IMR-90 (cell line): ENCODE measurements at regions of chr15 and their contacts with region 1.

Region 1: DNA sequence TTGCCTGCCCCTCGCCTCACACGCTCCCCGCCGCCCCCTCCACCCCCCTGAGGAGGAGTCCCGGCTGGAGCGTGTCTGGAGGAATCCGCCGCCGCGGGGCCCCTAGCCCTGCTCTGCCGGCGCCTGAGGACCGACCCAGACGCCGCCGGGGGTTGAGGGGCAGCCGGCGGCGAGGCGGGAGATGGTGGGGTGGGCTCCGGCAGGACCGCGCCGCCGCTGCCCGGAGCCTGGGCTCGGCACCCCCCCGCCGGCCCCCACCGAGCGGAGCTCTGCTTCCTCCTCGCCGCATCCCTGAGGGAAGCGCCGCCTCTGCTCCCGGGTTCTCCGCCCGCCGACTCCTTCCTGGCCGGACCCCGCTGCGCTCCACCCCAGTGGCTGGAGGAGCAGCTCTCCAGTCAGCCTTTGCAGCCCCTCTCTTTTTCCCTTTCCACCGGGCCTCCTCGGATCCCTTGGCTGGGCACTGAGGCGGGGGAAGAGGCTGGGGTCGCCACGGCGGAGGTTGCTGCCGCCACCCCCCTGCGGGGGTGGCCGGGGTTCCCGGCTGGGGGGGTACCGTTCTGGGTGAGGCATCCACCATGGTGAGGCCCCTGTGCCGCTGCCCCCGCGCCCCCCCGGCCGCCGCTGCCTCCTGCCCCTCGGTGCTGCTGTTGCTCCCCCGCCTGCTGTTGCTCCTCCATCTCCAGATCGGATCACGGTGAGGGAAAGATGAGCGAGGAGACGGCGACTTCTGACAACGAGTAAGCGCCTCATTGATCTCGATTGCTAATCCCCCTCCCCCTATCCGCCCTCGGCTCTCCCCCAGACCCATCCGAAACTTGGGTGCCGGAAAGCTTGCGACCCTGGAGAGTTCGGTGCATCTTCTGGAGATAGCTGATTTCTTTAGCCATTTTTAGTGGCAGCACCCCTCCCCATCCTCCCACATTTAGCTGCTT is at the start of gene SPRED1:
- DNase-seq: peak; percentile 48
- ATAC-seq: peak; percentile 50
- H3K4me3 ChIP-seq: peak within 1 kb of the TSS; percentile 95
- H3K27ac ChIP-seq: peak within 1 kb of the TSS; percentile 98
- H3K4me1 ChIP-seq: peaks cover 10% of the 10 kb centered on the region
- H3K27me3 ChIP-seq: no peaks in the 10 kb centered on the region
- CTCF ChIP-seq: no peak
- POLR2A ChIP-seq: no peak
- RAD21 ChIP-seq: no peak
- total RNA-seq, gene SPRED1: 17.9 and 38.3 TPM in 2 replicates

Region 2: DNA sequence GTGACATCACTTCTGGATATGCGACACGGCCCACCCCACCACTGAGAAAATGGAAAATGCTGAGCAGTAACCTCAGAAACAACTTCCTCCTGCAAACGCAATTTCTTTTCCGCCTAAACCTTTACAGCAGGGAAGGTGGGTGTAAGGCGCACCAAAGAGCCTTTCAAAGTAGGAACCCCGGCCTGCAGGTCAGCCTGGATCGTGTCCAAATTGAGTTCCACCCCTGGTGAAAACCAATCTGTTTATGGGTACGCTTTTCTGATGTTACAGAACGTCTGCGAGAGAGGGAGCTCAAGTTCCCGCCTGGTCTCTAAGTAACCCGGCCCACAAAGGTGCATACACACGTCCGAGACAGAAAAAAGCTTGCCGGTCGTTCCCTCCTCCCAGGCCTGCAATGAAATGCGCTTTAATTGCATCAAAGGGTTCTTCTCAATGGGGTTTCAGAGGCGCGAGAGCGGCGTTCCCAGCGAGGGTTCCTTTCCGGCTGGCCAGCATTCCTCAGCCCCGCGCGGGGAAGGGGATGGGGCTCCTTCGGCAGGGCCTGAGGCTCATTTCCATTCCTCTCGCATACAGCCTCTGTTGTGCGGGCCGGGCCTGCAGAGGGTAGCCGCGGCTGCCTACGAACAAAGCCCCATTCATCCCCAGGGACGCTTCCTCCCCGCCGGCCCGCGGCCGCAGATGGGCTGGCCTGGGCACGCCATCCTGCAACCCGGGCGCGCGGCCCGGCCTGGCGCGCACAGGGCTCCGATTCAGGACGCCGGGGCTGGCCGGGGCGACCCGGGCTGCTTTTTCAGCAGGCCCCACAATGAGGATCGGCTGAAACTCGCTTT is 180.2 kb before region 1 on chr15:
- CTCF ChIA-PET with region 1: interaction called, 6 read pairs
- POLR2A ChIA-PET with region 1: interaction called, 12 read pairs
- dilution Hi-C with region 1: no loop called
- in situ Hi-C with region 1: no loop called
- intact Hi-C with region 1: loop called (anchors 2 kb)
- DNase-seq: peak; percentile 71
- ATAC-seq: peak; percentile 75
- H3K4me3 ChIP-seq: peak overlapping the region; percentile 28
- H3K27ac ChIP-seq: peak overlapping the region; percentile 85
- H3K4me1 ChIP-seq: peaks cover 9% of the 10 kb centered on the region
- H3K27me3 ChIP-seq: no peaks in the 10 kb centered on the region
- CTCF ChIP-seq: peak; percentile 25; the same call in 1 of the 2 replicates
- POLR2A ChIP-seq: no peak
- RAD21 ChIP-seq: peak; percentile 17; the same call in 1 of the 2 replicates

Region 3: DNA sequence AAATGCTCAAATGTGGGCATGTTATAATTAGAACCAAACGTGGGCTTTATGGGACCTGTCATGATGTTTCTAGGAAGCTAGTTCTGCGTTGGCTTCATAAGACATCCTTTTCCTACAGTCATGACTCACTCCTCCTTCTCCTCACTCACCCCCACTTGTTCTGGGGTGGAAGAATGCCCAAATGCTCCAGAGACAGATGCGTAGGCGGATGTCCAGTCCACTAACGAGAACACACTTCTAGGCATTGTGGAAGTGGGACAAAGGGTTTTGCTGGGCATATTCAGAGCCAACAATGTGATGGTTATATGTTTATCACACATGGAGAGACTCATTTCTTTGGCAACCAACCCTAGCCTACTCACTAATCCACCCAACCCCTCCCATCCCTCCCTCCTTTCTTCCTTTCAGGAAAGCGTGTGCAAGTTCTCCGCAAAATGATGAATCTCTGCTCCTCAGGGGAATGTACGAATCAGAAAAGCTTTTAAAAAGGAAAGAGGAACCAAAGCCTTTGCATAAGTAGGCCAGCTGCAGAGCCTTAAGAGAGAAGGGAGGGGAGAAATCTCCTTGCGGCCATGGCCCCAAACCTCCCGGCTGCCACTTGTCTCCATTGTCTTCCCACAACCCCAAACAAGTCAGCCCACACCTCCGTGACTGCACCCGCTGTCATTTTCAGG is 123.1 kb before region 1 on chr15:
- CTCF ChIA-PET with region 1: no interaction called
- POLR2A ChIA-PET with region 1: interaction called, 4 read pairs
- dilution Hi-C with region 1: no loop called
- in situ Hi-C with region 1: no loop called
- intact Hi-C with region 1: loop called (anchors 1 kb)
- DNase-seq: peak; percentile 99
- ATAC-seq: peak; percentile 81
- H3K4me3 ChIP-seq: peak overlapping the region; percentile 10; the same call in 1 of the 2 replicates
- H3K27ac ChIP-seq: peak overlapping the region; percentile 54
- H3K4me1 ChIP-seq: peaks cover 4% of the 10 kb centered on the region
- H3K27me3 ChIP-seq: no peaks in the 10 kb centered on the region
- CTCF ChIP-seq: no peak
- POLR2A ChIP-seq: no peak
- RAD21 ChIP-seq: peak; percentile 20

Region 4: DNA sequence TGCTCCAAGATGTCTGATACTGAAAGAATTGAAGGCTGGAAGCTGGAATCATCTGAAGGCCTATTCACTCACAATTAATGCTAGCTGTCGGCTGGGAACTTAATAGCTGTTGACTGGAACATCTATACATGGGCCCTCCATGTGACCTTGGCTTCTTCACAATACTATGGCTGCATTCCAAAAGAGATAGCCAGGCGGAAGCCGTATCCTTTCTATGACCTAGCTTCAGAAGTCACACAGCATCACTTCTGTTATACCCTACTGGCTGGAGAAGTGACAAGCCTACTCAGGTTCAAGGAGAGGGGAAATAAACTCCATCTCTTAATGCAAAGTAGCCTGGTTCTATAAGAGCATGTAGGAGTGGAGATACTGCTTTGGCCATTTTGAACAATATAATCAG is 51.0 kb before region 1 on chr15:
- CTCF ChIA-PET with region 1: no interaction called
- POLR2A ChIA-PET with region 1: no interaction called
- dilution Hi-C with region 1: no loop called
- in situ Hi-C with region 1: no loop called
- intact Hi-C with region 1: no loop called
- DNase-seq: no peak
- ATAC-seq: no peak
- H3K4me3 ChIP-seq: no peak overlapping the region
- H3K27ac ChIP-seq: no peak overlapping the region
- H3K4me1 ChIP-seq: no peaks in the 10 kb centered on the region
- H3K27me3 ChIP-seq: peaks cover 8% of the 10 kb centered on the region
- CTCF ChIP-seq: no peak
- POLR2A ChIP-seq: no peak
- RAD21 ChIP-seq: no peak

Region 5: DNA sequence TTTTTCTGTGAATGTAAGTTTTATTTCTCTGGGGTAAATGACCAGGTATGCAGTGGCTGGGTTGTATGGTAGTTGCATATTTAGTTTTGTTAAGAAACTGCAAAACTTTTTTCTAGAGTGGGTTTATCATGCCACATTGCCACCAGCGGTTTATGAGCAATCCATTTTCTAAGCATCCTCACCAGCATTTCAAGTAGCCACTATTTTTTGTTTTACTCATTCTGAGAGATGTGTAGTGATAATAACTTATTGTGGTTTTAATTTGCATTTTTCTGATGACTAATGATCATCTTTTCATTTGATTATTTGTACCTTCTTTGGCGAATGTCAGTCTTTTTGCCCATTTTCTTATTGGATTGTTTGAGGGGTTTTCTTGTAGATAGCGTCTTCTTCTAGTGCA is 56.0 kb after region 1 on chr15:
- CTCF ChIA-PET with region 1: no interaction called
- POLR2A ChIA-PET with region 1: no interaction called
- dilution Hi-C with region 1: no loop called
- in situ Hi-C with region 1: no loop called
- intact Hi-C with region 1: no loop called
- DNase-seq: no peak
- ATAC-seq: no peak
- H3K4me3 ChIP-seq: no peak overlapping the region
- H3K27ac ChIP-seq: no peak overlapping the region
- H3K4me1 ChIP-seq: no peaks in the 10 kb centered on the region; the same call in 1 of the 2 replicates
- H3K27me3 ChIP-seq: no peaks in the 10 kb centered on the region
- CTCF ChIP-seq: no peak
- POLR2A ChIP-seq: no peak
- RAD21 ChIP-seq: no peak

Region 6: DNA sequence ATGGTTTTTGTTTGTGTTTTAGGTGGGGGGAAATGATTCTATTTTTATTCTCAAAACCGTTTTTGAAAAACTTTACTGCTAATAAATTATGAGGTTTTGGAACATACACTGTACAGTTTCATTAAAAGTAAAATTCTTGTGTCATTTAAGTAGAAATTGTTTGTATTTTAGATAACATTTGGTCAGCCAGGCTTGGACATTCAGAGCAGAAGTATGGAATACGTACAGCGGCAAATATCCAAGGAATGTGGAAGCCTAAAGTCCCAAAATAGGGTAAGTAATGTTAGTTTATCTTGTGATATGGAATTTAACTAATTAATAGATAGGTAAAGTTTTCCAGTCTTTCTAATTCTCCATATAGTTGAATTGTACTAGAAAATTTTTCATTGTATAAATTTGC is 96.5 kb after region 1 on chr15:
- CTCF ChIA-PET with region 1: interaction called, 3 read pairs
- POLR2A ChIA-PET with region 1: interaction called, 5 read pairs
- dilution Hi-C with region 1: no loop called
- in situ Hi-C with region 1: loop called (anchors 10 kb)
- intact Hi-C with region 1: loop called (anchors 1 kb)
- DNase-seq: peak; percentile 62
- ATAC-seq: peak; percentile 72
- H3K4me3 ChIP-seq: no peak overlapping the region
- H3K27ac ChIP-seq: no peak overlapping the region
- H3K4me1 ChIP-seq: peaks cover 7% of the 10 kb centered on the region; the same call in 1 of the 2 replicates
- H3K27me3 ChIP-seq: no peaks in the 10 kb centered on the region
- CTCF ChIP-seq: no peak
- POLR2A ChIP-seq: no peak
- RAD21 ChIP-seq: no peak

Region 7: GRCh38 chr15:38389924-38390542 is 137.3 kb after region 1 on chr15:
- CTCF ChIA-PET with region 1: interaction called, 3 read pairs
- POLR2A ChIA-PET with region 1: no interaction called
- dilution Hi-C with region 1: no loop called
- in situ Hi-C with region 1: no loop called
- intact Hi-C with region 1: loop called (anchors 5 kb)
- DNase-seq: peak; percentile 58
- ATAC-seq: peak; percentile 87
- H3K4me3 ChIP-seq: no peak overlapping the region
- H3K27ac ChIP-seq: no peak overlapping the region
- H3K4me1 ChIP-seq: no peaks in the 10 kb centered on the region
- H3K27me3 ChIP-seq: no peaks in the 10 kb centered on the region
- CTCF ChIP-seq: peak; percentile 71
- POLR2A ChIP-seq: no peak
- RAD21 ChIP-seq: peak; percentile 64

Region 8: DNA sequence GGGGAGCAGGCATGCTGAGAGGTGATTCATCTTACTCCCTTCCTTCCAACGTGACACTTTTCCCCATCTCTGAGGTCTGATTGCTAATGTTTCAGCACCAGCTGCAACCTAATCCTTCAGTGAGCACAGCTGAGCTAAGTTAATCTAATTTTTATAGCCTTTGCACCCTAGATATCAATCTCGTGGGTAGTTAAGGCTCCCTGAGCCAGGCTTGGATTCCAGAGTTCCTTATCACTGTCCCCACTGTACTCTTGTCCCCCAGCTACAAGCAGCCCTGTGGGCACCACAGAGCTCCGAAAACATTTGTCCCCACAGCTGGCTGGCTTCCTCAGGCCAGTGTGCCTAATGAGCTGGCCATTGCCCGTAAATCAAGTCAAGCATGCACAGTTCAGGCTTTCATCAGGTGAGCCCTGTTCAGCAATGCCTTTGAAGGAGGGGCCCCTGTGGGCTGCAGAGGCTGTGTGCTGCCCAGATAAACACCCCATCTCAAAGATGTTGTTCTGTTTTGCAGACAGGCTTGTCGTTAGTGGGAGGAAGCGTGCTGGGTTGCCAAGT is 688.7 kb after region 1 on chr15:
- CTCF ChIA-PET with region 1: no interaction called
- POLR2A ChIA-PET with region 1: no interaction called
- dilution Hi-C with region 1: no loop called
- in situ Hi-C with region 1: no loop called
- intact Hi-C with region 1: loop called (anchors 5 kb)
- DNase-seq: peak; percentile 46
- ATAC-seq: peak; percentile 57
- H3K4me3 ChIP-seq: no peak overlapping the region
- H3K27ac ChIP-seq: no peak overlapping the region
- H3K4me1 ChIP-seq: peaks cover 6% of the 10 kb centered on the region
- H3K27me3 ChIP-seq: no peaks in the 10 kb centered on the region
- CTCF ChIP-seq: no peak
- POLR2A ChIP-seq: no peak
- RAD21 ChIP-seq: no peak